Right ventricle myocardium inferior (tissue), 1 donor: ENCODE measurements at regions of chr1 and their contacts with region 1.

Region 1: DNA sequence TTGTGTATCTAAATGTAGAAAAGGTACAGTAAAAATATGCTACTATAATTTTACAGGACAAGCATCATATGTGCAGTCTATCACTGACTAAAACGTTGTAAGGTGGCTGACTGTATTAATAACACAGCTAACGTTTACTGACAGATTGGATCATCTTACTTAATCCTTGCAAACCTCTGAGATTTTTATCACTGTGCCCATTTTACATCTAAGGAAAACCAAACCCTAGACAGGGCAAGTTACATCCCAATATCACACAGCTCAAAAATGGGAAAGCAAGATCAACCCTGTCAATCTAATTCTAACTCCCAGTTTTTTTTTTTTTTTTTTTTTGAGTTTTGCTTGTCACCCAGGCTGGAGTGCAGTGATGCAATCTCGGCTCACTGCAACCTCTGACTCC is 7.5 kb upstream of the RIT1 start:
- DNase-seq: no peak
- ATAC-seq: no peak

Region 2: DNA sequence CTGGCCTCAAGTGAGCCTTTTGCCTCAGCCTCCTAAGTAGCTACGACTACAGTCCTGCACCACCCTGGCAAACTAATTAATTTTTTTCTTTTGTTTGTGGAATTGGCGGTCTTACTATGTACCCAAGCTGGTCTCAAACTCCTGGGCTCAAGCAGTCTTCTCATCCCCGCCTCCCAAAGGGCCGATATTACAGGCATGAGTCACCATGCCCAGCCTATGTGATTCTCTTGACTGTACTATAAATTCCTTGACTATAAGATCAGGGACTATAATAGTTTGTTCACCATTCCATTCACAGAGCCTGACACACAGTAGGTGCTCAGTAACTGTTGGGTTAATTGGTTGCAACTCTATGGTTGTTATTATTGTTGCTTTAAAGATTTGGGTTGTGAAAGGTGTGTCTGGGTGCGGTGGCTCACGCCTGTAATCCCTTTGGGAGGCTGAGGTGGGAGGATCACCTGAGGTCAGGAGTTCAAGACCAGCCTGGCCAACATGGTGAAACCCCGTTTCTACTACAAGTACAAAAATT is 212.5 kb before region 1 on chr1:
- intact Hi-C with region 1: no loop called
- DNase-seq: no peak
- ATAC-seq: no peak

Region 3: DNA sequence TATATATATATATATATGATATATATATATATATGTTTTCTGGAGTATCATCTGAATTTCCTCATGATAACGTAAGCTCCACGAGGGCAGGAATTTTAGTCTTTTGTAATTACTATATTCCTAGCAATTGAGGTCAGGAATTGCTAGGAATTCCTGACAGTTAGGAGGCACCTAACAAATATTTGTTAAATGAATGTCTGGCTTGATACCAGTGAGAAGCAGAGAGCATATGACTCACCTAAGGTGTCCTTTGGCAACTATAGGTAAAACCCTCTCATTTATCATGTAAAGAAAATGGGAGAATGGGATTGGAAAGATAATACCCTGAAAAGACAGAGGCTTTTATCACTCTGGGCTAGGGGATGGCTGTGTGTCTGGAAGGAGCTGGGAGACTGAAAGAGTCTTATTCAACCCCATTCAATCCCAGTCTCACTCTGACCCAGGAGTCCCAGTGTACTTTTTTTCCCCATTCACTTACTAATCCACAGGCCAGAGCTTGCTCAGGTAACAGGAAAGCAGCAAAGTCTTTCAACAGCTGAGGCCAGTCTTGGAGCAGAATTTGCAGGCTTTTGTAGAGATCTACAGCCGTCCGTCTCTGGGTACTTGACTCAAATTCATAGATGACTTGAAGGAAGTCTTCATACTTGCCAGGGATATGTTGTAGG is 158.6 kb before region 1 on chr1:
- intact Hi-C with region 1: loop called (anchors 5 kb)
- DNase-seq: no peak
- ATAC-seq: no peak

Region 4: GRCh38 chr1:156247460-156248322 is 329.0 kb after region 1 on chr1 and contains the start of gene PAQR6:
- intact Hi-C with region 1: no loop called
- DNase-seq: no peak
- ATAC-seq: peak; percentile 38
- total RNA-seq, gene PAQR6: 0.54 TPM